ENCODE measurements at regions of chr6 and their contacts with region 1.

Region 1: GRCh38 chr6:42166444-42167141 is 6.6 kb upstream of the GUCA1A start:
- H3K4me3 ChIP-seq: no peak overlapping the region
- H3K27ac ChIP-seq: no peak overlapping the region
- H3K4me1 ChIP-seq: no peaks in the 10 kb centered on the region
- CTCF ChIP-seq: peak; percentile 86

Region 2: DNA sequence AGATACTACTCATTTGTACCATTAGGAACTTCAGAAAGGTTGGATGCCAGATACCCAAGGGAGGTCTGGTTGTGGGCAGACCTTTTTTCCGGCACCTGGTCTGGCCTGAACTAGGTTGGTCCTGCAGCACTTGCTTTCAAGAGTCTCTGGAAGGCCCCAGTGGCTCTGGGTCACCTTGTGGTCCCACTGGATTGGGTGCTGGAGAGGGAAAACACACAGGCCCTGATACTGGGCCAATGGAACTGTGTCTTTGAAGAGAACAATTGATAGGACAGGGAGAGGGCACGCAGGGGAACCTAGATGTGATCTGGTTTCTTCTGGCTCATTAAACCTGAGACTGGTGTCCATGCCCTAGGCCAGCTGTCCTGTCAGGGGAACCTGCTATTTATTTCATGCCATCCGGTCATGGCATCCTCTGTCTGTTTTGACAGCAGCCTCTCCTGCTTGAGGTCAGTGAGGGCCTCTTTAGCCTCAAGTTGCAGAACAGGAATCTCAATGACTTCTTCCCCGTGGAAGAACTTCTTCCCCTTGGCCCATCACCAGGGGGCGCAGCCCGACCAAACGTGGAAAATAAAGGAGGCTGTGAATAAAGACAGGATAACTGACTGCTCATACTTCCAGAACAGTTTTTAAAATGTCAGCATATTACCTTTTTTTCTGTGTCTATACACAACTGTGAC is 91.3 kb before region 1 on chr6:
- CTCF ChIA-PET with region 1: interaction called, 15 read pairs
- POLR2A ChIA-PET with region 1: no interaction called
- H3K4me3 ChIP-seq: no peak overlapping the region
- H3K27ac ChIP-seq: no peak overlapping the region
- H3K4me1 ChIP-seq: no peaks in the 10 kb centered on the region
- CTCF ChIP-seq: peak; percentile 62